Caco-2 (cell line): ENCODE measurements at regions of chr2 and their contacts with region 1.

Region 1: DNA sequence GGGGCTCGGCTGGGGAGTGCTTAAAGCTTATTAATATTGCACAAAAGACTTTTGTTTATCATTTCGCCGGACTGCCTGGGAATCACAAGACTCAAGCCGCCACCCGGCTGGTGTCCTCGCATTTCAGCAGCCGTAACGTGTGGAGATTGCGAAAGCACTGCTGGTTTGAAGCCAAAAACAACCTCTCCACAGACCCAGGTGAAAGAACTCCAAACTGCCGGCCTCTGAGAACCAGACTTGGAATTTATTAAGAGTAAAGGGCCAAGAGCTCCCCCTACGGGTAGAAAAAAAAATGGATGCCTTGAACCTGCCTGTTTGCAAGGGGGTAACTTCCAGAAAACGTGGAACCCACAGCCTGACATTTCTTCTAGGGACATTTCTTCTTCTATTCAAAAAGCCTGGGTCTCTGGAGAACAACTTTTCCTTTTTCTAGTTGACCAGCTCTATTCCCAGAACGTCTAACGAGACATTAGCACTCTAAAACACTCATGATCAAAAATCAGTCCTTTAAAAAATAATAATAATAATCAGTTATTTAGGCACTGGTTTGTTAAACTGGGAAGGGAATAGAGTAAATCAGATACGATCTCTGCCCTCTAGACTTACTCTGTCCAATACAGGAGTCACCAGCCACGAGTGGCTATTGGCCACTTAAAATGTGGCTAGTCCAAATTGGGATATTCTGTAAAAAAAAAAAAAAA is 216.3 kb downstream of the C1D start:
- DNase-seq: peak; percentile 83 to 85
- H3K4me3 ChIP-seq: no peak overlapping the region
- H3K4me3 Mint-ChIP-seq: peak overlapping the region; percentile 46
- H3K27ac Mint-ChIP-seq: no peak overlapping the region
- H3K4me1 ChIP-seq: peaks cover 5% of the 10 kb centered on the region; the same call in 1 of the 2 replicates
- H3K4me1 Mint-ChIP-seq: no peaks in the 10 kb centered on the region
- H3K27me3 ChIP-seq: no peaks in the 10 kb centered on the region
- H3K27me3 Mint-ChIP-seq: peaks cover 3% of the 10 kb centered on the region
- CTCF ChIP-seq: peak; percentile 78 to 81

Region 2: DNA sequence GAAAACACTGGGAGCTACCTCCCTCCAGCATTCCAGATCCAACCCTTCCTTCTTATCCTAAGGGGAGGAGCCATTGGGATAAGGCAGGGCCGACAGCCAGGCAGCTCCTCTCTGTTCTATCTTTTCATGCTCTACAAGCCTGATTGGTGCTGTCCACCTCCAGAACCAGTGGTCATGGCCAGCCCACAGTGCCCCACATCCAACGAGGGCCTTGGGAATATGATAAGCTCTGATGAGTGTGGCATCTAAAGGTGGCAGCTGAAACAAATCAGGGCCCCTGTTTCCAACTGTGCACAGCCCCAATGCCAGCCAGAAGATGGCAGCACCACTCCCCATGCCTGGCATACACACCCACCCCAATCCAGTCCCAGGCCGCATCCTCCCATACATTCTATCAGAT is 113.0 kb before region 1 on chr2:
- CTCF ChIA-PET with region 1: no interaction called
- POLR2A ChIA-PET with region 1: no interaction called
- intact Hi-C with region 1: loop called (anchors 1 kb)
- DNase-seq: peak; percentile 36 to 37
- H3K4me3 ChIP-seq: no peak overlapping the region
- H3K4me3 Mint-ChIP-seq: no peak overlapping the region
- H3K27ac Mint-ChIP-seq: no peak overlapping the region
- H3K4me1 ChIP-seq: no peaks in the 10 kb centered on the region
- H3K4me1 Mint-ChIP-seq: no peaks in the 10 kb centered on the region
- H3K27me3 ChIP-seq: no peaks in the 10 kb centered on the region
- H3K27me3 Mint-ChIP-seq: peaks cover 1% of the 10 kb centered on the region
- CTCF ChIP-seq: peak; percentile 26 to 45

Region 3: GRCh38 chr2:67891642-67892041 is 45.1 kb after region 1 on chr2:
- CTCF ChIA-PET with region 1: interaction called, 4 read pairs
- POLR2A ChIA-PET with region 1: no interaction called
- intact Hi-C with region 1: loop called (anchors 1 kb)
- DNase-seq: peak; percentile 76 to 80
- H3K4me3 ChIP-seq: no peak overlapping the region
- H3K4me3 Mint-ChIP-seq: peak overlapping the region; percentile 49
- H3K27ac Mint-ChIP-seq: peak overlapping the region; percentile 92
- H3K4me1 ChIP-seq: peaks cover 39% of the 10 kb centered on the region
- H3K4me1 Mint-ChIP-seq: peaks cover 28% of the 10 kb centered on the region
- H3K27me3 ChIP-seq: no peaks in the 10 kb centered on the region
- H3K27me3 Mint-ChIP-seq: no peaks in the 10 kb centered on the region
- CTCF ChIP-seq: no peak

Region 4: GRCh38 chr2:67904966-67905365 is 58.4 kb after region 1 on chr2:
- CTCF ChIA-PET with region 1: no interaction called
- POLR2A ChIA-PET with region 1: no interaction called
- intact Hi-C with region 1: no loop called
- DNase-seq: no peak
- H3K4me3 ChIP-seq: no peak overlapping the region
- H3K4me3 Mint-ChIP-seq: no peak overlapping the region
- H3K27ac Mint-ChIP-seq: no peak overlapping the region
- H3K4me1 ChIP-seq: 0 out of 2 replicates have a peak, but pooled peaks cover 3% of the 10 kb centered on the region
- H3K4me1 Mint-ChIP-seq: no peaks in the 10 kb centered on the region
- H3K27me3 ChIP-seq: no peaks in the 10 kb centered on the region
- H3K27me3 Mint-ChIP-seq: peaks cover 3% of the 10 kb centered on the region
- CTCF ChIP-seq: no peak

Region 5: DNA sequence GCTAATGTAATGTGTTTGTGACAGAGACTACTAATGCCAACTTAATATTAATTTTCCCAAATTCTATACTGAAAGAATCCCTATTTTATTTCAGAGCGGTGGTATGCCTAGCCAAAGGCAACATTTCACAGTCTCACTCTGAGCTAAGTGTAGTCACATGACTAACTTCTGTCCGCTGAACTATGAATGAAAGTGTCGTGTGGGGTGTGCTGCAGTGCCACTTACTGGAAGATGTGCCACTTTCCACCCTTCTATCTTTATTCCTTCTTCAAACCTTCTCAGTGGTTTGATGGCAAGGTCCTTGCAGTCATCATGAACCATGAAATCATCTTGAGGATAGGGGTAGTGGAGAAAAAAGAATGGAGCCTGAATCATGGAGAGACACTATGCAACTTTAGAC is 263.6 kb after region 1 on chr2:
- CTCF ChIA-PET with region 1: no interaction called
- POLR2A ChIA-PET with region 1: no interaction called
- intact Hi-C with region 1: no loop called
- DNase-seq: peak in 1 of 2 experiments; percentile 19
- H3K4me3 ChIP-seq: no peak overlapping the region
- H3K4me3 Mint-ChIP-seq: no peak overlapping the region
- H3K27ac Mint-ChIP-seq: no peak overlapping the region
- H3K4me1 ChIP-seq: no peaks in the 10 kb centered on the region
- H3K4me1 Mint-ChIP-seq: no peaks in the 10 kb centered on the region
- H3K27me3 ChIP-seq: no peaks in the 10 kb centered on the region
- H3K27me3 Mint-ChIP-seq: no peaks in the 10 kb centered on the region
- CTCF ChIP-seq: peak in 1 of 2 experiments; percentile 18